A673 (cell line): ENCODE measurements at regions of chr10 and their contacts with region 1.

Region 1: GRCh38 chr10:120942806-120943413 is 91.7 kb downstream of the WDR11 start:
- DNase-seq: peak; percentile 81
- H3K4me3 ChIP-seq: no peak overlapping the region
- H3K27ac ChIP-seq: no peak overlapping the region
- H3K4me1 ChIP-seq: no peaks in the 10 kb centered on the region
- H3K27me3 ChIP-seq: no peaks in the 10 kb centered on the region
- CTCF ChIP-seq: peak; percentile 89

Region 2: GRCh38 chr10:120543291-120543690 is 399.6 kb before region 1 on chr10:
- CTCF ChIA-PET with region 1: no interaction called
- POLR2A ChIA-PET with region 1: no interaction called
- intact Hi-C with region 1: no loop called
- DNase-seq: no peak
- H3K4me3 ChIP-seq: no peak overlapping the region
- H3K27ac ChIP-seq: no peak overlapping the region
- H3K4me1 ChIP-seq: no peaks in the 10 kb centered on the region
- H3K27me3 ChIP-seq: no peaks in the 10 kb centered on the region
- CTCF ChIP-seq: no peak

Region 3: DNA sequence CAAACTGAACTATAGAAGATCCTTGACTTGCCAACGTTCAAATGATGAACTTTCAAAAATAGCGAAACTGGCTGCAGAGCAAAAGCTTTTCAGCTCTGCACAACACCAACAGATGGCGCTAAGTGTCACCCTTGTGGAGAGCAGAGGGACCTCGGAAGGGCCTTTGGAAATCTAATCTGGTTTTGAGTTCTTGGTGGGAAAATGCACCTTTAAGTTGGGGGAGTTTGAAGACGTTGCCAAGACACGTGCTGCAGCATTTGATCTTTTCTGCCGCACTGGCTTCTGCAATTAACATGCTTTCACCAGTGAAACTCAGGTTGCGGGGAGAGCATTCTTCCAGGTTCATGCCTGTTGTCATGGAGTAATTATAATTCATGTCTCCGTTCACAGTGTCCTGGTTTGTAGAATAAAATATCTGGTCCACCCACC is 118.0 kb before region 1 on chr10:
- CTCF ChIA-PET with region 1: no interaction called
- POLR2A ChIA-PET with region 1: no interaction called
- intact Hi-C with region 1: no loop called
- DNase-seq: peak; percentile 65
- H3K4me3 ChIP-seq: no peak overlapping the region
- H3K27ac ChIP-seq: no peak overlapping the region
- H3K4me1 ChIP-seq: no peaks in the 10 kb centered on the region
- H3K27me3 ChIP-seq: peaks cover 46% of the 10 kb centered on the region
- CTCF ChIP-seq: peak; percentile 83

Region 4: DNA sequence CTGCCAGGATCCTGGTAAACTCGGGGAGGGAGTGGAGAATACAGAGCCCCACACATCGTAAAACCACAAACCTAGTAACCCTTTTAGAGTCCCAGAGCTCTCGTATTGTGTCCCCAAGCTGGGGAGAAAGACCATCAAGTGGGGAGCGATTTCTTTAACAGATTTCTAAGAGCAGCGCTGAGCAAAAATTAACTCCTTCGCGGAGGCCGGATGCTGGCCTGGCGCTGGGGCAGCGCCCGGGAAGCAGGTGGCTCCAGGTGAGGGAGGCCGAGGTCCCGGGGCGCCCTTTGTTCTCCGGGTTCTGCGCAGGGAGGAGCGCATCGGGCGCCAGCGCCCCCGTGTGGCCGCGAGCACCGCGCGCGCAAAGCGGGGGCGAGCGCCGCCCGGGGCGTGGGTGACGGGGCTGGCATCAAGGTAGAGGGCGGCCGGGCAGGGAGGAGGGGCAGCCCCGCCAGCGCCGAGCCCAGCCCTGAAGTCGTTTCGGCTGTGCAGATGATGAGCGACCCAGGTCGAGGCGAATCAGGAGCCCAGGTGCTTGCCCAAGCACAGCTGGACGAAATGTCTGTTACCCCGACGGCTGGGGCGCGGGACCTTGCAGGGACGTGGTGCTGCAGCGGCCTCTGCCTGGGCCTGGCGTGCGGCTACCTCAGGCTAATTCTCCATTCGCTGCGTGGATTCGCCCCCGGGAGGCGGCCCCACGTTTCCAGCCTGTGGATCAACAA is 665.7 kb after region 1 on chr10:
- CTCF ChIA-PET with region 1: no interaction called
- POLR2A ChIA-PET with region 1: no interaction called
- intact Hi-C with region 1: loop called (anchors 1 kb)
- DNase-seq: peak; percentile 46
- H3K4me3 ChIP-seq: peak overlapping the region; percentile 37
- H3K27ac ChIP-seq: no peak overlapping the region
- H3K4me1 ChIP-seq: no peaks in the 10 kb centered on the region
- H3K27me3 ChIP-seq: peaks cover 10% of the 10 kb centered on the region
- CTCF ChIP-seq: peak; percentile 80

Region 5: DNA sequence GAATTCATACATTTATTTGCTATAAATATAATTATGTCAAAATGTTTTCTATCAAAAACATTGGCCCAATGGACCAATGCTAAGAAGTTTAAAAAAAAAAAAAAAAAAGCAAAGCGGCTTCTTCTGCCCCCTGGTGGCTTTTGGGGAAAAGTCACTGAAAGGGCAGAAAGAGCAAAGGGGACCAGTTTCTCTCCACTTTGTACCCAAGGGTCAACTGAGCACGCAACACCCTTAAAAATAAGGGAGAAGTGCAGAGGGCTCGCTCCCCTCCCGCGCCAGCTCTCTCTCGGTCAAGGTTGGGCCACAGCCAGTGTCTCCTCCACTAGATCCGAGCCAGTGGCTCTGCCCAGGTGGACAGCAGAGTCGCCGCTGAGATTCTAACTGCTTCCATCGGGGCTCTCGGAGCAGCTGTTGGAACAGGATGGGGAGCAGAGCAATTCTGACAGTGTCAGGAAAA is 791.7 kb after region 1 on chr10:
- CTCF ChIA-PET with region 1: no interaction called
- POLR2A ChIA-PET with region 1: no interaction called
- intact Hi-C with region 1: loop called (anchors 2 kb)
- DNase-seq: peak; percentile 38
- H3K4me3 ChIP-seq: no peak overlapping the region
- H3K27ac ChIP-seq: no peak overlapping the region
- H3K4me1 ChIP-seq: no peaks in the 10 kb centered on the region
- H3K27me3 ChIP-seq: no peaks in the 10 kb centered on the region
- CTCF ChIP-seq: peak; percentile 77

Region 6: GRCh38 chr10:121886997-121887622 is 944.2 kb after region 1 on chr10:
- CTCF ChIA-PET with region 1: no interaction called
- POLR2A ChIA-PET with region 1: no interaction called
- intact Hi-C with region 1: loop called (anchors 5 kb)
- DNase-seq: peak; percentile 68
- H3K4me3 ChIP-seq: no peak overlapping the region
- H3K27ac ChIP-seq: no peak overlapping the region
- H3K4me1 ChIP-seq: no peaks in the 10 kb centered on the region
- H3K27me3 ChIP-seq: no peaks in the 10 kb centered on the region
- CTCF ChIP-seq: peak; percentile 84

Region 7: GRCh38 chr10:121900443-121901174 is 957.7 kb after region 1 on chr10:
- CTCF ChIA-PET with region 1: no interaction called
- POLR2A ChIA-PET with region 1: no interaction called
- intact Hi-C with region 1: loop called (anchors 2 kb)
- DNase-seq: peak; percentile 85
- H3K4me3 ChIP-seq: no peak overlapping the region
- H3K27ac ChIP-seq: no peak overlapping the region
- H3K4me1 ChIP-seq: no peaks in the 10 kb centered on the region
- H3K27me3 ChIP-seq: no peaks in the 10 kb centered on the region
- CTCF ChIP-seq: peak; percentile 78